Panc1 (cell line): ENCODE measurements at regions of chr11 and their contacts with region 1.

Region 1: GRCh38 chr11:69683764-69684333 is 8.7 kb upstream of the LTO1 start:
- DNase-seq: no peak
- ATAC-seq: peak; percentile 73
- H3K4me3 ChIP-seq: no peak overlapping the region
- H3K27ac ChIP-seq: no peak overlapping the region
- H3K4me1 ChIP-seq: no peaks in the 10 kb centered on the region
- H3K27me3 ChIP-seq: no peaks in the 10 kb centered on the region
- CTCF ChIP-seq: peak; percentile 94

Region 2: GRCh38 chr11:68727785-68728184 is 956.1 kb before region 1 on chr11:
- CTCF ChIA-PET with region 1: interaction called, 13 read pairs
- POLR2A ChIA-PET with region 1: no interaction called
- in situ Hi-C with region 1: no loop called
- intact Hi-C with region 1: no loop called
- DNase-seq: no peak
- ATAC-seq: no peak
- H3K4me3 ChIP-seq: no peak overlapping the region
- H3K27ac ChIP-seq: no peak overlapping the region
- H3K4me1 ChIP-seq: no peaks in the 10 kb centered on the region
- H3K27me3 ChIP-seq: no peaks in the 10 kb centered on the region
- CTCF ChIP-seq: peak; percentile 49; the same call in 1 of the 2 replicates

Region 3: GRCh38 chr11:69892237-69893035 is 208.6 kb after region 1 on chr11:
- CTCF ChIA-PET with region 1: interaction called, 3 read pairs
- POLR2A ChIA-PET with region 1: no interaction called
- in situ Hi-C with region 1: no loop called
- intact Hi-C with region 1: loop called (anchors 5 kb)
- DNase-seq: no peak
- ATAC-seq: 0 out of 2 replicates have a peak, but pooled peaks have one; percentile 20
- H3K4me3 ChIP-seq: no peak overlapping the region
- H3K27ac ChIP-seq: no peak overlapping the region
- H3K4me1 ChIP-seq: 0 out of 2 replicates have a peak, but pooled peaks cover 8% of the 10 kb centered on the region
- H3K27me3 ChIP-seq: peaks cover 12% of the 10 kb centered on the region
- CTCF ChIP-seq: no peak

Region 4: GRCh38 chr11:69909561-69910496 is 226.0 kb after region 1 on chr11:
- CTCF ChIA-PET with region 1: interaction called, 3 read pairs
- POLR2A ChIA-PET with region 1: no interaction called
- in situ Hi-C with region 1: no loop called
- intact Hi-C with region 1: loop called (anchors 5 kb)
- DNase-seq: no peak
- ATAC-seq: peak; percentile 38; the same call in 1 of the 2 replicates
- H3K4me3 ChIP-seq: no peak overlapping the region
- H3K27ac ChIP-seq: no peak overlapping the region
- H3K4me1 ChIP-seq: peaks cover 5% of the 10 kb centered on the region
- H3K27me3 ChIP-seq: no peaks in the 10 kb centered on the region
- CTCF ChIP-seq: peak; percentile 99